PC-9 (cell line): ENCODE measurements at regions of chr5 and their contacts with region 1.

Region 1: DNA sequence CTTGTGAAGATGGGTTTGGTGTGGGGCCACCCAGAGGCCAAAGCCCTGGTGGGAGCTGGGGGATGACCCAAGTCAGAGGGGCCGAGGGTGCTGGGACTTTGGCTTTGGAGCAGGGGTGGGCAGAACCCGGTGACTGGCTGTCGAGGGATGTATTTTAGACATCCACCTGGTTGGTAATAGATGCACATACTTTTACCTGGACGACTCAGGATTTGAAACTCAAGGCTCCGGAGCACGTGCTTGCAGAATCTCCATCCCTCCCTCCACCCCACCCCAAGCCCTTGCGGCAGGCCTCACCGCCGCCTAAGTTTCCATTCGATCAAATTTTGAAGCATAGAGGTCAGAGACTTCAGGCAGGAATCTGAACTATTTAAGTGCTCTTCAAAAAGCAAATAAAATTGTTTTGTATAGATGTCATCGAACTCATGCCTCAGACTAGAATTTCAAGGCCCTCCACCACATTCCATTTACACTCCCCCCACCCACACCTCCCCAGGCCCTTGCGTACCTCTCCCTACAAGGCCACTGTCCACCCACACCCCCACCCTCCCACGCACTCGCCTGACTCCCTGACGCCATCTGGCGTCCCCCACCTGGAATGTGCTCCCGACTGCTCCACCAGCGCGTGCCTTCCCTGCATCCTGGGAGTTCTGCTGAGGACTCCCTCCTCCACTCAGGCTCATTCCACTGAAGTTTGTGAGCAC is 56.6 kb upstream of the RPL26L1 start:
- DNase-seq: peak; percentile 79 to 97
- H3K4me3 ChIP-seq: no peak overlapping the region
- H3K27ac ChIP-seq: peak overlapping the region; percentile 99
- H3K4me1 ChIP-seq: peaks cover 51% of the 10 kb centered on the region
- H3K27me3 ChIP-seq: no peaks in the 10 kb centered on the region
- CTCF ChIP-seq: peak; percentile 72

Region 2: DNA sequence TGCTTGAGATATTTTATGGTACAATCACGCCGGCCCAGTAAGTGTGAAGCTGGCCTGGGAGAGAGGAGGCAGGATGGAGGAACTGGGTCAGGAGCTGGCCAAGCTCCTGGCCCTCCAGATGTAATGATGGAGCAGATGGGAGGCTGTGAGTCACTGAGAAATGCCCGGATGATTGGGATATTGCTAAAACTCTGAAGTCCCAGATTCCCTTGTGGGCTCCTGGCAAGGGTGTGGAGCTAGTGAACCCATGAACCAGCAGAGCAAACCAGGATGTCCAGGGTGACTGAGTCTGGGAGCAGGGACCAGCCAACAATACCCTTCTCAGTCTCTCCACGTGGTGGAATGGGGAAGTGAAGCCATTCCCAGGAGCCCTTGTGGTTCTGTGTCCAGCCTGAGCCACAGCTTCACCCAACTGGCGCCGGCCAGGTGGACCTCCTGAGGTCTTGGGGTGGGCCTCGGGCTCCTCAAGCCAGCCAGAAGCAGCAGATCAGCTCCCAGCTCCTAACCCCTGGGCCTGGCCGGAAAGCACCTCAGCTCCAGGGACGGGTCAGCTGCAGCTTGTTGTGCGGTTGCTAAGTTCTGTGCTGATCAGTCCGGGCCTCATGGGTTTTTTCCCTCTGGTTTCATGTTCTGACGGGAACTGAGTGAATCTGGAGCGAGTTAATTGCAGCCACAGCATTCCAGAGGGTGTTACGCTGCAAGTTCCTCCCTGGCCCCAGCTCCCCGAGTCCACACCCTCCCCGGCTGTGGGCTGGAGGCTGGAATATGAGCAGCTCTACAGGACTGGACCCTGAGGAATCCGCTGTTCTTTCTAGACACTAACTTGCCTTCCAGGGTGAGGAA is 169.3 kb before region 1 on chr5:
- CTCF ChIA-PET with region 1: no interaction called
- POLR2A ChIA-PET with region 1: no interaction called
- intact Hi-C with region 1: loop called (anchors 1 kb)
- DNase-seq: peak; percentile 89
- H3K4me3 ChIP-seq: peak overlapping the region; percentile 5; the same call in 1 of the 2 replicates
- H3K27ac ChIP-seq: peak overlapping the region; percentile 96
- H3K4me1 ChIP-seq: peaks cover 44% of the 10 kb centered on the region
- H3K27me3 ChIP-seq: no peaks in the 10 kb centered on the region
- CTCF ChIP-seq: no peak

Region 3: DNA sequence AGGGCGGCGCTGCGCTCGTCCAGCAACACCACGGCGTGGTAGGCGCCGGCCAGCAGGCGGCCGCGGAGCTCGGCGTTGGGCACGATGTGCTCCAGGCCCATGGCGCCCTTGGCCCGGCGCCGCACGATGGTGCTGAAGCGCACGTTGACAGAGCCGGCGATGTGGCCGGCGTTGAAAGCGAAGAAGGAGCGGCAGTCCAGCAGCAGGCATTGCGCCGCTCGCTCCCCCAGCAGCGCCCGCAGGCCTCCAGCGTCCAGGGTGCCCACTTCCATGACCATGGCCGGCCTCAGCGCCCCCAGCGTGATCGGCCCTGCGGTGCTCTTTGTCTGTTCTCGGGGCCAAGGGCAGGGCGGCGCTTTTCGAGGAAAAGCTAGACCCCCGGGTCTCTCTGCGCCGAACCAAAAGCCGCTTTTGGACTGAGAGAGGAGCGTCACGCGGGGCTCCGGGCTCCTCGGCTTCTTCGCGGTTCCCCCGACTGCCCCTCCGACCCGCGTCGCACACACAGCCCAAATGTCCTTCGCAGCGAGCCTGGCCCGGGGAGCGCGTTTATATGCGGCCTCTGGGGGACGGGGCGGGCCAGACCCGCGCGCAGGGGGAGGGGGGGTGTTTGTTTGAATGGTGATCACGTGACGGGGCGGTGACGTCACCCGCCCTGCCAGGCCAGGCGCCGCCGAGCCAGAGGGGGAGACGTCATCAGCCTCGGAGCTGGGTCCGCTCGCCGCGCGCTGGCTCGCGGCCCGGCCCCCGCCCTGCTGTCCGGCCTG is 131.8 kb before region 1 on chr5 and contains the start of gene DUSP1:
- CTCF ChIA-PET with region 1: interaction called, 12 read pairs
- POLR2A ChIA-PET with region 1: interaction called, 20 read pairs
- intact Hi-C with region 1: loop called (anchors 1 kb)
- DNase-seq: peak; percentile 84 to 98
- H3K4me3 ChIP-seq: peak within 1 kb of the TSS; percentile 91
- H3K27ac ChIP-seq: peak within 1 kb of the TSS; percentile 93
- H3K4me1 ChIP-seq: peaks cover 61% of the 10 kb centered on the region
- H3K27me3 ChIP-seq: no peaks in the 10 kb centered on the region
- CTCF ChIP-seq: peak; percentile 50; the same call in 1 of the 2 replicates
- total RNA-seq, gene DUSP1: 10.3 and 18.4 TPM in 2 replicates

Region 4: GRCh38 chr5:172806897-172807672 is 95.6 kb before region 1 on chr5:
- CTCF ChIA-PET with region 1: no interaction called
- POLR2A ChIA-PET with region 1: no interaction called
- intact Hi-C with region 1: loop called (anchors 1 kb)
- DNase-seq: peak; percentile 86 to 89
- H3K4me3 ChIP-seq: peak overlapping the region; percentile 44; the same call in 1 of the 2 replicates
- H3K27ac ChIP-seq: peak overlapping the region; percentile 83
- H3K4me1 ChIP-seq: peaks cover 23% of the 10 kb centered on the region
- H3K27me3 ChIP-seq: no peaks in the 10 kb centered on the region
- CTCF ChIP-seq: no peak

Region 5: DNA sequence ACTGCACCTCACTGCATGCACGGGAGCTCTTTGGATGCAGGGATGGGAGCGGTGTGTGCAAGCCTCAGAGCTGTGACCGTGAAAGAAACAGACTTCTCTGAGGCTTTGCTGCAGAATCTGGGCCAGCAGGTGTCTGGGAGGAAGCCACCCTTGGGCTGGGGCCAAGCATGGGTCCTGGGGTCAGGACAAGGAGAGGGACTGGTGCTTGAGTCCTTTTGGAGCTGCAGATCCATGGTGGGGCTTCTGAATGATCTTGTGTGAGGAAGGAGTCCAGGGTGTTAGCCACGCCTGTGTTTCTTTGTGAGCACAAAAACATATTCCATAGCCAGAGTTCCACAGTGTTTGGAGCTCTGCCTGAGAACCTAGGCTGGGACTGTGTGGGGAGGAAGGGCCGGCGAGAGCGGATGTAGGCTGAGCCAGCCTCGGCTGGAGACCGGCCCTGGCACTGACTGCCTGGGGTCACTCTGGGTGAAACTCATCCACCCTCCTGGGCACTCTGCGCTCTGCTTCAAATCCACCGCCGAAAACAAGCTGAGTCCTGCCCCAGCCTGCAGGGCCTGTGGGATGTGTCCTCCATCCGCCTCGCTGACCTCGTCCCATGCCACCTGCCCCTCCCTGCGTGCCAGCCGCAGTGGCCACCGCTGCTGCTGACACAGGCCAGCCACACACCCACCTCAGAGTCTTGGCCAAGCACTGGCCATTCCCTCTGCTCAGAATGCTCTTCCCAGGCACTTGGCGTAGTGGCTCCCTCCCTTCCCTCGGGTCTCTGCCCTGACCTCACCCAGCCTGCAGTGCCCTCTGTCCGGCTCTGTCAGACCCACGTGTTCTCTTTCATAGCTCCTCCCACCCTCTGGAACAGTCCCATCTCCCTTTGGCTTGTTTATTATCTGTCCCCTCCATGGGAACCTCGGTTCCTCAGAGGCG is 41.9 kb before region 1 on chr5:
- CTCF ChIA-PET with region 1: interaction called, 6 read pairs
- POLR2A ChIA-PET with region 1: interaction called, 5 read pairs
- intact Hi-C with region 1: loop called (anchors 1 kb)
- DNase-seq: peak; percentile 64 to 90
- H3K4me3 ChIP-seq: no peak overlapping the region
- H3K27ac ChIP-seq: peak overlapping the region; percentile 99
- H3K4me1 ChIP-seq: peaks cover 65% of the 10 kb centered on the region
- H3K27me3 ChIP-seq: no peaks in the 10 kb centered on the region
- CTCF ChIP-seq: no peak

Region 6: DNA sequence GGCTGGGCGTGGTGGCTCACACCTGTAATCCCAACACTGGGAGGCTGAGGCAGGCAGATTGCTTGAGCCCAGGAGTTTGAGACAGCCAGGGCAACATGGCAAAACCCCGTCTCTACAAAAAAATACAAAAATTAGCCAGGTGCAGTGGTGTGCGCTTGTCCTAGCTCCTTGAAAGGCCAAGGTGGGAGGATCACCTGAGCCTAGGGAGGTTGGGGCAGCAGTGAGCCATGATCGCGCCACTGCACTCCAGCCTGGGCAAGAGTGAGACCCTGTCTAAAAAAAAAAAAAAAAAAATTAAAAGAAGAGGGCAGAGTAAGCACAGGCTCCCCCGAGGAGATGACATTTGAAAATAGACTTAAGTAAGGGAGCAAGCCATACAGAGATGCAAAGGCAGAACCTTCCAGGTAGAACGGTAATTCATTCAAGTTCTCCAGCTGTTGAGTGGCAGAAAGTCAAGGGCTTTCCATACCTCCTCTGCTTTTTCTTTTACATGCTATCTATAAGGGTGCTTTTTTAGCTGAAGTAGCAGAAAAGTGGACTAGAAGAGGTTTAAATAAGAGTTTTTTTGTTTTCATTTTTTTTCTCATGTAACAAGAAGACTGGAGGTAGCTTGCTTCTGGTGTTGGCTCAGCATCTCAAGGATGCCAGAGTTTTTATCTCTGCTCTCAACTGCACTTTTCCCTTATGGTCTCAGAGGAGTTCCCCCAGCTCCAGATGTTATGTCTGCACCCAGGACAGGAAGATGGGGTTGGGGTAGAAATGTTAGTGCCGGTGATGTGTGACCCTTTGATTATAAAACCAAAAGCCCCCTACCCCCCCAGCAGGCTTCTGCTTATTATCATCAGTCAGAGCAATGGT is 27.8 kb before region 1 on chr5:
- CTCF ChIA-PET with region 1: no interaction called
- POLR2A ChIA-PET with region 1: interaction called, 22 read pairs
- intact Hi-C with region 1: no loop called
- DNase-seq: no peak
- H3K4me3 ChIP-seq: no peak overlapping the region
- H3K27ac ChIP-seq: no peak overlapping the region
- H3K4me1 ChIP-seq: peaks cover 14% of the 10 kb centered on the region
- H3K27me3 ChIP-seq: no peaks in the 10 kb centered on the region
- CTCF ChIP-seq: no peak

Region 7: GRCh38 chr5:172958331-172959046 is 55.8 kb after region 1 on chr5:
- CTCF ChIA-PET with region 1: no interaction called
- POLR2A ChIA-PET with region 1: interaction called, 7 read pairs
- intact Hi-C with region 1: loop called (anchors 2 kb)
- DNase-seq: peak; percentile 55 to 74
- H3K4me3 ChIP-seq: peak overlapping the region; percentile 99
- H3K27ac ChIP-seq: peak overlapping the region; percentile 72
- H3K4me1 ChIP-seq: peaks cover 14% of the 10 kb centered on the region
- H3K27me3 ChIP-seq: no peaks in the 10 kb centered on the region
- CTCF ChIP-seq: no peak